Endothelial cell of umbilical vein (primary cell): ENCODE measurements at regions of chr1 and their contacts with region 1.

Region 1: DNA sequence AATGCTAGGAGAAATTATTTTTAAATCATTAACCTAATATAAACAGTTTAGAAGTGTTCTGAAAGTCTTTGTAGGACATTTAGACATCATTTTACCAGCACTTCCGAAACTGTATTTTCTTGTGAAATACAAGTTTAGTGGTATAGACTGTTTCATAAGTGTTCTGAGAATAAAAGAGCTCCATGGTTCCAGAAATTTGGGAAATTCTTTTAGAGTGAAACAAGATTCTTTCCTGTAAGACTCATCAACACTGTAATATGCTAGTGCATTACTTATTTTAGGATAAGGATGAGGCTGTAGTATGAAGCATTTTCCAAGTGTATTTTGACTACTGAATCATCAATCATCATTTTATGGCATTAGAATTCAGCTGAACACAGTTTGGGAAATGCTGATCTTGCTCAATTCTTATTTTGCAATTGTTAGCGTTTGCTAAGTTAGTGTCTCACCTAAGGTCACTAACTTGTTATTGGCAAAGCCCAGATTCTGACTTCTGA is 73.4 kb downstream of the CEP350 start:
- DNase-seq: peak; percentile 26
- H3K4me3 ChIP-seq: no peak overlapping the region
- H3K27ac ChIP-seq: peak overlapping the region; percentile 4
- H3K4me1 ChIP-seq: peaks cover 25% of the 10 kb centered on the region
- H3K27me3 ChIP-seq: no peaks in the 10 kb centered on the region
- CTCF ChIP-seq: no peak
- POLR2A ChIP-seq: no peak

Region 2: DNA sequence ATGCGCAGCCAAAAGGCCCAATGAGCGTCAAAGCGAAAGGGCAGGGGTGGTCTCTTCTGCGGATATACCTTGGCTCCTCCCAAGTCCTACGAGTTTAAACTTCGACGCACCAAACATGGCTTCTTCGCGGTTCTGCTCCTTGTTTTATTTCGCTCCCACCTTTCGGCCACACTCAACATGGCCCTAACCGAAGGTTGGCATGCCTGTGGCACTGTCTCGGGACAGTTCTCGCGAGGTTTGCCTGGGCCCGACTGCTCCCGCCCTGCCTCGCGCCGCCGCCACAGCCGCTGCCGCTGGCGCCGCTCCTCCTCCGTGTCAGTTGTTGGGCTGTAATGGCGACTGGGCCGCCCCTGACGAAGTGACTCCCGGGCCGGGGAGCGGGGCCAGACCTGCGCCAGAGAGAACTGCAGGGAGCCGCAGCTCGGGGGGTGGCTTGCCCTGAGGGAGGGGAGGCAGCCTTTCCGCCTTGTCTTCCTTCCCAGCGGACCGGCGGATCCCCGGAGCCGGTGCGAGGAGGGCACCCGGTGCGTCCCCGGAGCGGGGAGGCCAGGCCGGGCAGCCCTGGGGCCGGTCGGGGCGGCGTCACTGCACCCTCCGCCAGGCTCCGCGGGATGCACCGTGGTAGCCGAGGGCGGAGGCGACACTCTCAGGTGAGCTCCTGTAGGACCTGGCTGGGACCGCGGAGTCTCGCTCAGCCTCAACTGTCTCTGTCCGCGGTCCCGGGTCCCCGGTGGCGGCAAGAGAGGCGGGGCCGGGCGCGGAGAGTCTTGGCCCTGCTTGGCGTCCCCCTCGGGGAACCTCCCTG is 73.3 kb before region 1 on chr1 and contains the start of gene CEP350:
- CTCF ChIA-PET with region 1: interaction called, 6 read pairs
- POLR2A ChIA-PET with region 1: no interaction called
- dilution Hi-C with region 1: no loop called
- intact Hi-C with region 1: loop called (anchors 1 kb)
- DNase-seq: peak; percentile 99
- H3K4me3 ChIP-seq: peak within 1 kb of the TSS; percentile 88 to 95 (median 95)
- H3K27ac ChIP-seq: peak within 1 kb of the TSS; percentile 55
- H3K4me1 ChIP-seq: peaks cover 22% of the 10 kb centered on the region
- H3K27me3 ChIP-seq: no peaks in the 10 kb centered on the region
- CTCF ChIP-seq: no peak
- POLR2A ChIP-seq: peak; percentile 87
- total RNA-seq, gene CEP350: 30.1 and 30.3 TPM in 2 replicates

Region 3: GRCh38 chr1:180040034-180040433 is 12.0 kb after region 1 on chr1:
- CTCF ChIA-PET with region 1: interaction called, 5 read pairs
- POLR2A ChIA-PET with region 1: no interaction called
- dilution Hi-C with region 1: no loop called
- intact Hi-C with region 1: loop called (anchors 2 kb)
- DNase-seq: peak; percentile 76
- H3K4me3 ChIP-seq: no peak overlapping the region
- H3K27ac ChIP-seq: peak overlapping the region; percentile 32
- H3K4me1 ChIP-seq: peaks cover 23% of the 10 kb centered on the region
- H3K27me3 ChIP-seq: no peaks in the 10 kb centered on the region
- CTCF ChIP-seq: no peak
- POLR2A ChIP-seq: no peak